Ascending aorta (tissue), 2 donors: ENCODE measurements at regions of chr18 and their contacts with region 1.

Region 1: GRCh38 chr18:50307738-50308470 is 20.4 kb upstream of the CXXC1 start:
- DNase-seq: peak; percentile 75 to 94
- H3K4me3 ChIP-seq: peak overlapping the region; percentile 48 to 61
- H3K27ac ChIP-seq: no peak overlapping the region
- H3K4me1 ChIP-seq: peaks cover 0 to 4% of the 10 kb centered on the region in 2 donors
- H3K27me3 ChIP-seq: no peaks in the 10 kb centered on the region
- CTCF ChIP-seq: no peak

Region 2: GRCh38 chr18:50266248-50266704 is 41.6 kb before region 1 on chr18 and contains the start of gene CFAP53:
- intact Hi-C with region 1: loop called (anchors 5 kb)
- DNase-seq: peak; percentile 51 to 95
- H3K4me3 ChIP-seq: peak within 1 kb of the TSS; percentile 57 to 87
- H3K27ac ChIP-seq: no peak within 1 kb of the TSS
- H3K4me1 ChIP-seq: no peaks in the 10 kb centered on the region
- H3K27me3 ChIP-seq: no peaks in the 10 kb centered on the region
- CTCF ChIP-seq: no peak
- total RNA-seq, gene CFAP53: not detected

Region 3: GRCh38 chr18:50401888-50402287 is 94.0 kb after region 1 on chr18:
- intact Hi-C with region 1: no loop called
- DNase-seq: no peak
- H3K4me3 ChIP-seq: no peak overlapping the region
- H3K27ac ChIP-seq: no peak overlapping the region
- H3K4me1 ChIP-seq: no peaks in the 10 kb centered on the region
- H3K27me3 ChIP-seq: no peaks in the 10 kb centered on the region
- CTCF ChIP-seq: no peak